ENCODE measurements at regions of chr10 and their contacts with region 1.

Region 1: GRCh38 chr10:89679986-89680385 is 21.4 kb upstream of the KIF20B start:
- DNase-seq: no peak
- ATAC-seq: no peak
- H3K4me3 ChIP-seq: no peak overlapping the region
- H3K27ac ChIP-seq: no peak overlapping the region
- H3K4me1 ChIP-seq: peaks cover 2% of the 10 kb centered on the region
- H3K27me3 ChIP-seq: no peaks in the 10 kb centered on the region

Region 2: DNA sequence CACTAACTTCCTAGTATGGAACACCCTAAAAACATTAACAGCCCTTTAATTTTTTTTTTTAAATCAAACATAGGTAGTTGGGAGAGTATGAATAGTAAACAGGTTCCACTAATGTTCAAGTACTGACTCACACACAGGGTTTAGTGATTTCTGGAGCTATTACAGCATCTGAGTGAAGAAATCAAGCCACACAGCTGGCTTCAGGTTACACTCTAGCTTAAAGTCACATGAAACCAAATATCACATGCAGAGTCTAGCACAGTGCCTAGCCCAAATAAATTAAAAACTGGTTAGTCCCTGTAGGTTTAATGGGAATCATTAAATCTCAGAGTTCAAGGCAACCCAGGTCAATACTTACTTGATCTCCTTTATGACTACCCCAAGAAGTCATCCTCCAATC is 46.5 kb before region 1 on chr10:
- intact Hi-C with region 1: no loop called
- DNase-seq: no peak
- ATAC-seq: no peak
- H3K4me3 ChIP-seq: no peak overlapping the region
- H3K27ac ChIP-seq: no peak overlapping the region
- H3K4me1 ChIP-seq: no peaks in the 10 kb centered on the region
- H3K27me3 ChIP-seq: no peaks in the 10 kb centered on the region

Region 3: GRCh38 chr10:90319188-90319914 is 639.4 kb after region 1 on chr10:
- intact Hi-C with region 1: loop called in 1 of 4 experiments (anchors 10 kb)
- DNase-seq: no peak
- ATAC-seq: no peak
- H3K4me3 ChIP-seq: no peak overlapping the region
- H3K27ac ChIP-seq: no peak overlapping the region
- H3K4me1 ChIP-seq: no peaks in the 10 kb centered on the region
- H3K27me3 ChIP-seq: peaks cover 2% of the 10 kb centered on the region